MCF 10A (cell line): ENCODE measurements at regions of chr17 and their contacts with region 1.

Region 1: DNA sequence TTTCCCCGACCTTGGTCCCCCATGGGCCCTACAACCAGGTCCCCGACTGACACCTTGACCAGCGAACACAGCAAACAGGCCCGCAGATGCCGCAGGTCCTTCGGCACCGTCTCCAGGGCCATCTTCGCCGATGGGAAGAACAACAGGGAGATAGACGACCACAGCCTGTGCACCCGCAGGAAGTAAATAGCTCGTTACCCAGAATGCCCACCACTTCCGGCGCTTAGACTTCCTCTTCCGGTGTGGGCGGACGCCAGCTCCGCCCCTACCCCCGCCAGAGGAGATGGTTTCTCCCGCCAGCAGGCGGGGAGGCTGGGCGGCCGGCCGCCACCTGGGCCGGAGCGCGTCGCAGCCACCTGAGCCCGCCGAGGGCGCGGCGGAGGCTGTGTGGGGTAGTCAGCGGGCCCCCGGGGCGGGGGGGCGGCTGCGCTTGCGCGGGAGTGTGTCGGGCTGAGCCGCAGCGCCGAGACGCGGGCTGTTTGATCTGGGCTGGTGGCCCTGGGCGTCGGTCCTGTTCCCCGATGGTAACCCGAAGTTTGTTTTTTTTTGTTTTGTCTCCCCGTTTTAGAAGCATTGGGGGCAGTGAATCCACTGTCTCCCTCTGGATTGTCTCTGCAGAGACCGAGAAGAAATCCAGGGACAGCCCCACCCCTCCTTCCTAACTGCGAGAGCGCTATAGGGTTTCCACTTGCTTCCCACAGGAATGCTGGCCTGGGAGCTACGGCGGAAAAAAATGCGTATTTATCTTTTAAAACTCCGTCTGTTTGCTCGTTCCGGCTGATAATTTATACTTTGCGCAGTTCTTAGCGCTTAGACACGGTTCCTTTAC is at the start of gene SUPT4H1:
- DNase-seq: peak; percentile 94
- H3K4me3 Mint-ChIP-seq: peak within 1 kb of the TSS; percentile 98
- H3K27ac Mint-ChIP-seq: peak within 1 kb of the TSS; percentile 97
- H3K4me1 Mint-ChIP-seq: peaks cover 10% of the 10 kb centered on the region
- H3K27me3 Mint-ChIP-seq: no peaks in the 10 kb centered on the region
- CTCF ChIP-seq: no peak
- total RNA-seq, gene SUPT4H1: 63.4 and 90.8 TPM in 2 replicates

Region 2: DNA sequence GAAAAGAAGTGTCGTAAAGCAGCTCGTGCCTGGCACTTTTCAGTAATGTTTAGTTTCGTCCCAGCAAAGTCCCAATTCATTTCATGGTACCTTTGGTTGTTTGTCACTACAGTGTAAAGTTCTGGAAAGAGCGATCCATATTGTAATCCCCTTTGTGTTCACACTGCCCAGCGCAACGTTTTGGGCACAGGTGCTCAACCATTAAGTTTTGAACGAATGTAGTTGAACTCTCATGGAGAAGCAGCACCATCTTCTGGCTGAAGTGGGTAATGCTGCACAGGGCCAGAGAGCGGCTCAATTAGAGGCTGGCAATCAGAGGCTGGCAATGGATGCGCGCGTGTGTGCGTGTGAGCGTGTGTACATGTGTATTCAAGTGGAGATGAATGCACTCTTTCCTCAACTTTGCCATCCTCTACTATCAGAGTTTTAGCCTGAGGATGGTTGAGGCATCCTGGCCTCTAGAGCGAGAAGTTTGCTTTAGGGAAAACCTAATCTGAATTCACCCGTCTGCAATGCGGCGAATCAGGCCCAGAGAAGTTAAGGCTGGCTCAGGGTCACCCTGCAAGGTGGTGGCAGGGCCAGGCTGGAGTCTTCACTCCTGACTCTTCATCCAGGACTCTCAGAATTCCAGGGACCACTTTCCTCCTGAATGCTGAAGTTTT is 239.1 kb before region 1 on chr17:
- CTCF ChIA-PET with region 1: no interaction called
- POLR2A ChIA-PET with region 1: no interaction called
- intact Hi-C with region 1: no loop called
- DNase-seq: peak; percentile 81
- H3K4me3 Mint-ChIP-seq: no peak overlapping the region
- H3K27ac Mint-ChIP-seq: no peak overlapping the region
- H3K4me1 Mint-ChIP-seq: no peaks in the 10 kb centered on the region
- H3K27me3 Mint-ChIP-seq: peaks cover 16% of the 10 kb centered on the region
- CTCF ChIP-seq: peak; percentile 93

Region 3: DNA sequence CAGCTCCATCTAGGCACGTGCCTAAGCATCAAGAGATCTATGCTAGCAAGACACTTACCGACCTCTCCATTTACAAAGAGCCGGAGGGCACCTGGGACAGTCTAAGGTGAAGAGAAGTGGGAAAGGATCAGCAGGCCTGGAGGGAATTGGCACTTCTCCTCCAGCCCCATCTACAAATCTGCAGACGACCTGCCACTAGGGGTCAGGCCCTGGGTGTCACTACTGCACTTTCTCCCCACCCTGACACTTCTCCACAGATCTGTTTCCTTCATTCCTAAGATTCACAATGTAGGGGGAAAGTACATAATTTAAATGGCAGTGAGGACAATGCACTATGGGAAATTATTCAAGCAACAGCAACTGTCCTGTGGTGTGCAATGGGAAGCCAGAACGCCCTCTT is 141.3 kb before region 1 on chr17:
- CTCF ChIA-PET with region 1: no interaction called
- POLR2A ChIA-PET with region 1: no interaction called
- intact Hi-C with region 1: no loop called
- DNase-seq: no peak
- H3K4me3 Mint-ChIP-seq: no peak overlapping the region
- H3K27ac Mint-ChIP-seq: no peak overlapping the region
- H3K4me1 Mint-ChIP-seq: no peaks in the 10 kb centered on the region
- H3K27me3 Mint-ChIP-seq: no peaks in the 10 kb centered on the region
- CTCF ChIP-seq: no peak

Region 4: DNA sequence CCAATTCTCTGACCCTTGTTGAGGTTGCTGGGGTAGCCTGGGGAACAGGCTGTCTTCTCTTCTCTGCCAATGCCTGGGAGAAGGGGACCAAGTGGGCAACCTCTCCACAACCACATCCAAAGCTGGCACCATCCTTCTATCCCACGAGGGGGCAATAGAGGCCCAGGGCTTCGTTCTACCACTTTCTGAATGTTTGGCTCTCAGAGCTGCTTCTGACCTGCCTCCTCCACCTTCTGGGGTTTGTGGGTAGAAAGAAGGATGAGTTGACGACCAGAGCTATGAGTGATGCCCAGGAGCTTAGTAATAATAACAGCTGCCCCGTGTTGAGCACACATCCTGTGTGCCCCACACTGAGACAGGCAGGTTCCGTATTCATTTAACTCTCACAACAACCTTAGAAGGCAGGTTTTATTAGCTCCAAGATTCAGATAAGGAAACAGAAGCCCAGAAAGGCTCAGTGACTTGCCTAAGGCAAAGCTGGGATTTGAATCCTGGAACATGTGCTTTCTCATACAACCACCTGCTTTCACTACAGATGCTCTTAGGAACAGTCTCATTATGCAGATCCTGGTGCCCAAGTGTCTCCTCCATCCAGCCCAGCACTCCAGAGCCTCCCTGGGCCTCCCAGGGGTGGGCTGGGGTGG is 34.7 kb before region 1 on chr17:
- CTCF ChIA-PET with region 1: interaction called, 19 read pairs
- POLR2A ChIA-PET with region 1: interaction called, 8 read pairs
- intact Hi-C with region 1: loop called (anchors 1 kb)
- DNase-seq: peak; percentile 78
- H3K4me3 Mint-ChIP-seq: no peak overlapping the region
- H3K27ac Mint-ChIP-seq: no peak overlapping the region
- H3K4me1 Mint-ChIP-seq: peaks cover 11% of the 10 kb centered on the region
- H3K27me3 Mint-ChIP-seq: no peaks in the 10 kb centered on the region
- CTCF ChIP-seq: peak; percentile 86

Region 5: GRCh38 chr17:58364270-58364942 is 12.2 kb after region 1 on chr17:
- CTCF ChIA-PET with region 1: interaction called, 3 read pairs
- POLR2A ChIA-PET with region 1: interaction called, 50 read pairs
- intact Hi-C with region 1: no loop called
- DNase-seq: peak; percentile 15
- H3K4me3 Mint-ChIP-seq: no peak overlapping the region
- H3K27ac Mint-ChIP-seq: no peak overlapping the region
- H3K4me1 Mint-ChIP-seq: peaks cover 8% of the 10 kb centered on the region
- H3K27me3 Mint-ChIP-seq: no peaks in the 10 kb centered on the region
- CTCF ChIP-seq: no peak

Region 6: DNA sequence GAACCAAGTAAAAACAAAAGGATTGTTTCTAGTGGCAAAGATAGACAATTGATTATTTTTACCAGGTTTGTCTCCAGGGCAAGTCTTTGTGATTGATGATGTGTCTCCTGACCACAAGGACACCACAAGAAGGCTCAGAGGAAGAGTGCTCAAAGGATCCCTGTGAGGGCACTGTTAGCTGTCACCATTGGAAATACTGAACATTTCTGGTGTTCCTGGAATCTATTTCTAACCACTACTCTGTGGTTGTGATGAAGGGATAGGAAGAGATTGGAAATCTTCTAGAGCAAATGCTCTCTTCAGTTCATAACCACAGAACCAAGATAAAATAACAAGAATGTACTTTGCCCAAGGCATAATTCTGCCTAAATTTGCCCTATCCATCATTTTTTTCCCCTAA is 49.8 kb after region 1 on chr17:
- CTCF ChIA-PET with region 1: no interaction called
- POLR2A ChIA-PET with region 1: interaction called, 56 read pairs
- intact Hi-C with region 1: no loop called
- DNase-seq: no peak
- H3K4me3 Mint-ChIP-seq: peak overlapping the region; percentile 38
- H3K27ac Mint-ChIP-seq: peak overlapping the region; percentile 89
- H3K4me1 Mint-ChIP-seq: peaks cover 37% of the 10 kb centered on the region
- H3K27me3 Mint-ChIP-seq: no peaks in the 10 kb centered on the region
- CTCF ChIP-seq: no peak

Region 7: GRCh38 chr17:58417300-58418092 is 65.3 kb after region 1 on chr17 and contains the start of gene RNF43:
- CTCF ChIA-PET with region 1: interaction called, 54 read pairs
- POLR2A ChIA-PET with region 1: interaction called, 436 read pairs
- intact Hi-C with region 1: loop called (anchors 1 kb)
- DNase-seq: peak; percentile 99
- H3K4me3 Mint-ChIP-seq: peak within 1 kb of the TSS; percentile 84
- H3K27ac Mint-ChIP-seq: peak within 1 kb of the TSS; percentile 95
- H3K4me1 Mint-ChIP-seq: peaks cover 30% of the 10 kb centered on the region
- H3K27me3 Mint-ChIP-seq: peaks cover 25% of the 10 kb centered on the region
- CTCF ChIP-seq: peak; percentile 75
- total RNA-seq, gene RNF43: 6.7 and 7.9 TPM in 2 replicates